ENCODE measurements at regions of chr5 and their contacts with region 1.

Region 1: DNA sequence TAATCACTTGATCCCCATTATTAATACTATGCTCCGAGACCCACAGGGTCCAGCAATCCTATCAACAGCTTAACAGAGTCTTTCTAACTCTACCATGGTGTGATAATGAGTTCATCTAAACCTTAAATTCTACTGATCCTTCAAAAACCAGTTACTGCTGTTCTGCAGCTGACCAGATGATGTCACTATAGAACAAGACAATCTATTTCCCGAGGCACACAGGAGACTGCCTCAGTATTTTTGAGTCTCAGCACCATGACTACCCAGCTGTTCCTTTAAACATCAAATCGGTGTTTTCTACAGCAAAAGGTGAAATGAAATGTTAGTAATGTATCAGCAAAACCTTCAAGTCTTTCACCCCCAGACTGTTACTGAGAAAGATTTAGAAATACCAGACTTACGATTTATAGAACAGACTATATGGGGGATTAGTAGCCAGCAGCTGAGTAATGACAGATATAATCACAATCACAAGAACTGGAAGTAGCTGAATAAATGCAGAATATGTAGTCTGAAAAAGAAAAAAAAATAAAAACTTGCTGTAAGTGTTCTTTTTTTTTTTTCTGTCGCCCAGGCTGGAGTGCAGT is 16.9 kb downstream of the DNAJC18 start:
- DNase-seq: peak; percentile 57 to 65
- H3K4me3 ChIP-seq: no peak overlapping the region
- H3K4me1 ChIP-seq: no peaks in the 10 kb centered on the region
- H3K27me3 ChIP-seq: no peaks in the 10 kb centered on the region

Region 2: DNA sequence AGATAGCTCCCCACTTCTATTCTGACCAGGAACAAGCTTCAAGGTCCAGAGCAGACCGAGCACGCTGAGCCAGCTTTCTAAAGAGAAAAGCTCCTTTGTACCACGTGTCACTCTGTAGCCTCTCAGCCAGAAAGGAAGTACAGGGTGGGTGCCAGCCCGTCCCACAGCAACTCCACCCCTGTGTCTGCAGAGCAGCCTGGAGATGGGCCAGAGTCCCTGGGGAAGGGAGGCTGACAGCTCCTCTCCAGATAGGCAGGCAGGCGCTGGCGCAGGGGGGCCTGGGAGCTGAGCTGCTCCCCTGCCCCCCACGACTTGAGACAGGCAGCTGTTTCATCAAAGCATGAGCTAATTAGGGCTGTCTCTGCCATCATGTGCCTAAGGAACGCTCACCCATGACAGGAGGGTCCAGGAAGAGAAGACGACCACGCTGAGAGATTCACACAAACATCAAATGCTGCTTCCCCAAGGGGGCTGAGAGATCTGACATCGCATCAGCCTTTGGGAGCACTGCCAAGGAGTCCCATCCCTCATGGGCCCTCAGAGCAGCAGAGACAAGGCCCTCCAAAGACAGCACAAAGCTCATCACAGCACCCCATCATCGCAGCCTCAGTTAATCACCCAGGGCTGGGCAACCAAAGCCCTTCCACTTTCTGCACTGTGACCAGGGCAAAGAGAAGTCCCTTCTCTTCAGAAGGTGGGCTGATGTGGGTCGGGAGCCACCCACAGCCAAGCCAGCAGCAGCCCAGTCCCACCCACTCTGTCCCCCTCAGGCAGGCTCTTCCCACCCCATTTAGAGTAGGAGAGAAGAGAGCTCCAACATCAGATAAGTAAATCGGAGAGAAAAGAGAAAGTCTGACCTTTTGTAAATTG is 468.8 kb before region 1 on chr5:
- in situ Hi-C with region 1: no loop called
- DNase-seq: no peak
- H3K4me3 ChIP-seq: no peak overlapping the region
- H3K4me1 ChIP-seq: no peaks in the 10 kb centered on the region
- H3K27me3 ChIP-seq: no peaks in the 10 kb centered on the region

Region 3: DNA sequence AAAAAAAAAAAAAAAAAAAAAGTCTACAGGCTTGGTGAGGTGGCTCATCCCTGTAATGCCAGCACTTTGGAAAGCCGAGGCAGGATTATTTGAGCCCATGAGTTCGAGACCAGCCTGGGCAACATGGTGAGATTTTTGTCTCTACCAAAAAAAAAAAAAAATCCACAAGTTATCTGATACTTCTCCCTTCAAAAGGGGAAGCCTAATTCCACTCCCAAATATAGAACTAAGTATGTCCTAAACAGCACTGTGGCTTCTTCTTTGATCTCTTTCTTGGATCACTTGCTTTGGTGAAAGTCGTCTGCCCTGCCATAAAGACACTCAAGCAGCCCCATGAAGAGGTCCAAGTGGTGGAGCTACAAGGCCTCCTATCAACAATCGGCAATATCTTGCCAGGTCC is 79.0 kb after region 1 on chr5:
- in situ Hi-C with region 1: no loop called
- DNase-seq: no peak
- H3K4me3 ChIP-seq: no peak overlapping the region
- H3K4me1 ChIP-seq: no peaks in the 10 kb centered on the region
- H3K27me3 ChIP-seq: no peaks in the 10 kb centered on the region

Region 4: GRCh38 chr5:139517683-139518564 is 95.5 kb after region 1 on chr5:
- in situ Hi-C with region 1: loop called (anchors 5 kb)
- DNase-seq: peak; percentile 79 to 93
- H3K4me3 ChIP-seq: peak overlapping the region; percentile 31
- H3K4me1 ChIP-seq: peaks cover 9% of the 10 kb centered on the region
- H3K27me3 ChIP-seq: no peaks in the 10 kb centered on the region

Region 5: GRCh38 chr5:139611703-139612584 is 189.5 kb after region 1 on chr5:
- in situ Hi-C with region 1: loop called (anchors 10 kb)
- DNase-seq: no peak
- H3K4me3 ChIP-seq: no peak overlapping the region
- H3K4me1 ChIP-seq: peaks cover 7% of the 10 kb centered on the region
- H3K27me3 ChIP-seq: no peaks in the 10 kb centered on the region

Region 6: DNA sequence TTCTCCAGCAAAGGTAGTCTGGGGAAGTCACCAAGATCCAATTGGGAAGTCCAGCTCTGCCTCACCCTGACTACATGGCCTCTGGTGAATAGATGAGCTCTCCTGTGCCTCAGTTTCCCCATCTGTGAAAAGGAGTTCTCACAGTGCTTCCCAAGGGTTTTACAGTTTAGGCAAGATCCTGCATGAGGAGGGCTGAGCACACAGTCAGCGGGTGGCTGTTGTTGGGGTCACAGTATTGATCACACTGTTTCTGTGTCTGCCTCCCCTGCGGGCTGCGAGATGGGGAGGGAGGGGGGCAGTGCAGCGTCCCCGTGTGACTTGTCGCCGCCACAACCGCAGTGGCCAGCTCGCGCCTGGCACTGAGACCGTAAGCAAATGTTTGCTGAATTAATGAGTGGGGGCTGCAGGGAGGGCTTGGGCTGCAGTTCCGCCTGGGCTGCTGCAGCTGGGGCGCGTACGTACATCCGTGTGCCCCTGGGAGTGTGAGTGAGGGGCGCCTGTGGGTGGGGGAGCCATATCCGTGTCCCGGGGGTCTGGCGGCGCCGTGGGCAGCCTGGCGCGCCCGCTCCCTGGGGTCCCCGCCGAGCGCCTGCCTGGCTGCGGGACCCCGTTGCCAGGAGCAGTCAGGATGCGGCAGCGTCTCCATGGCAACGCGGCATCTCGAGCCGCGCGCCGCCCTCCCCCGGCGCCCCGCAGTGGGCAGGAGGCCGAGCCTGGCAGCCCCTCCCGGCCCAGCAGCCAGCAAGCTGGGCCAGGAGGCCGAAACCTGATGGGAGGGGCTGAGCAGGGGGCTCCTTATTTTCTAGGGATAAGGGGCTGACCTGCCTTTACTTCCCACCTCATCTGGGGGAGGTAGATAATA is 341.8 kb after region 1 on chr5:
- in situ Hi-C with region 1: loop called (anchors 5 kb)
- DNase-seq: no peak
- H3K4me3 ChIP-seq: no peak overlapping the region
- H3K4me1 ChIP-seq: 0 out of 2 replicates have a peak, but pooled peaks cover 2% of the 10 kb centered on the region
- H3K27me3 ChIP-seq: no peaks in the 10 kb centered on the region

Measured in HAP-1 (cell line).